Dorsolateral prefrontal cortex (tissue), 120 donors: ENCODE measurements at regions of chr4 and their contacts with region 1.

Region 1: DNA sequence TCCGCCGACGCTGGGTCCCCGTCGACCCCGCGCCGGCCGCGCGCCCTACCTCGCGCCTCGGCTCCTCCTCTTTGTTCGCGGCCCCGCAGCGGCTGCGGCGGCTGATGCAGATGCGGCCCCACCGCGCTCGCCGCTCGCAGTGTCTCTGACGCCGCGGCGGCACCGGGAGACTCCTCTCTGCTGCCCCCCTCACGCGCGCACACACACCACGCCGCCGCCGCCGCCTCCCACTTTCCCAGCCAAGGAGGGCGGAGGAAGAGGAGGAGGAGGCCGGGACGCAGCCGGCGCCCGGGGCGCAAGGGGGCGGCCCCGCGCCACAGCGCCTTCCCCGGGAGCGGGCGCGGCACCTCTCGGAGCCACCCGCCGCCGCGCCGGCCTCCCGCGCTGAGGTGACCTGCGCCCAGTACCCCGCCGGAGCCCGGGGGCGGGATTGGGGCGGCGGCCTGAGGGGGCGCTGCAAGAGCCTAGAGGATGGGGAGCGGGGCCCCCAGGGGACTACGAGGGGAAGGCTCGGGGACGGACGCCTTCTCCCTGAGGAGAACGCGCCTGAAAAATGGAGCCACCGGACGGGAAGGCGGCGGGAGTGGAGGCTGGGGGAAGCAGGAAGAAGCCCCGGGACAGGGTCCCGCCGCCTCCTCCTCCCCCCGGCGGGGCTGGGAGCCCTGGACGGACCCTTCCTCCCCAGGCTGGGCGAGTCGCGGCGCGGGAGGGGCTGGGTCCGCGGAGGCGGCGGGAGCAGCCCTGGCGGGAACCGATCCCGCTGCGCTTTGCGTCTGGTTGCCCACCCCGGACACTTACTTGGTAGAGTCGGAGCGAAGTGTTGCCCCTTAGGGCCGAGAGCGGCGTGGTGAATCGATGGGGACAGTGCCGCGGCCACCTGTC is at the start of gene SH3RF1:
- DNase-seq: peak; percentile 45 to 88 (median 76)
- H3K4me3 ChIP-seq: peak within 1 kb of the TSS; percentile 59 to 98 (median 90)
- H3K27ac ChIP-seq: peak within 1 kb of the TSS; percentile 71 to 99 (median 92)
- H3K27me3 ChIP-seq: no peaks in the 10 kb centered on the region
- CTCF ChIP-seq: peak in 46 of 56 donors; percentile 11 to 76 (median 45)
- total RNA-seq, gene SH3RF1: 18.2 to 46.9 (median 29.5) TPM

Region 2: GRCh38 chr4:168923526-168924194 is 347.4 kb before region 1 on chr4:
- intact Hi-C with region 1: loop called in 1 of 2 experiments (anchors 10 kb)
- DNase-seq: peak in 5 of 10 donors; percentile 49 to 67 (median 56)
- H3K4me3 ChIP-seq: peak overlapping the region in 1 of 59 donors; percentile 9
- H3K27ac ChIP-seq: peak overlapping the region in 1 of 59 donors; percentile 14
- H3K27me3 ChIP-seq: no peaks in the 10 kb centered on the region
- CTCF ChIP-seq: peak; percentile 56 to 92 (median 82)

Region 3: DNA sequence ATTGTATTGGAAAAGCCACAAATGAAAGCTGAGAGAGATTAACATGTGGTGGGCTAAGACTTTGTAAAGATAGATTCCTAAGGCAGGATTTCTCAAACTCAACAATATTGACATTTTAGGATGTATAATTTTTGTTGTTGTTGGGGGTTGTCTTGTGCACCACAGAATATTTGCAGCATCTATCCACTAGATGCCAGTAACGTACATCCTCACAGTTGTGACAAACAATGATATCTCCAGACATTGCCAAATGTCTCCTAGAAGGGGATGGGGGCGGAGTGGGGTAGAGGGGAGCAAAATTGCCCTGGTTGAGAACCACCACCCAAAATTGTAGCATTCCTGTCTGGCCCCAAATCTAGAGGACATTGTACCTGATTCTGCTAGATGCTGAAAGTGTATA is 246.3 kb before region 1 on chr4:
- intact Hi-C with region 1: loop called (anchors 5 to 10 kb)
- DNase-seq: no peak
- H3K4me3 ChIP-seq: no peak overlapping the region
- H3K27ac ChIP-seq: no peak overlapping the region
- H3K27me3 ChIP-seq: no peaks in the 10 kb centered on the region
- CTCF ChIP-seq: peak in 55 of 56 donors; percentile 43 to 85 (median 65)

Region 4: DNA sequence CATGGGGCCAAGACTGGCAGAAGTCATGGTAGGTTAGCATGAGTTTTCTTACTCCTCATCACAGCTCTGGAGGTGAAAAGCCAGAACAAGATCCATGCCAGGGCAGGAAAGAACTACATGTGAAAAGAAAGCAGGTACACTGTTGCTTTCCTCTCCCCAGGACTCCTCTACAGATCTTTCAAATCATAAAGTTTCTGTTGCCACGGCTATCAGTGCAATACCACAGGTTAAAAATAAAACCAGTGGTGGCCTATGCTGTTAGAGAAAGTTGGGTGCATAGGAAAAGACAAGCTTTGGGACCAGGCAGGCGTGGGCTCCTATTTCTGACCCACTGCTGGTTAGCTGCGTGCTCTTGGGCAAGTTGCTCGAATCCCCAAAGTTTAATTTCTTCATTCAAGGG is 81.7 kb before region 1 on chr4:
- intact Hi-C with region 1: loop called in 1 of 2 experiments (anchors 5 kb)
- DNase-seq: no peak
- H3K4me3 ChIP-seq: no peak overlapping the region
- H3K27ac ChIP-seq: no peak overlapping the region
- H3K27me3 ChIP-seq: no peaks in the 10 kb centered on the region
- CTCF ChIP-seq: no peak

Region 5: DNA sequence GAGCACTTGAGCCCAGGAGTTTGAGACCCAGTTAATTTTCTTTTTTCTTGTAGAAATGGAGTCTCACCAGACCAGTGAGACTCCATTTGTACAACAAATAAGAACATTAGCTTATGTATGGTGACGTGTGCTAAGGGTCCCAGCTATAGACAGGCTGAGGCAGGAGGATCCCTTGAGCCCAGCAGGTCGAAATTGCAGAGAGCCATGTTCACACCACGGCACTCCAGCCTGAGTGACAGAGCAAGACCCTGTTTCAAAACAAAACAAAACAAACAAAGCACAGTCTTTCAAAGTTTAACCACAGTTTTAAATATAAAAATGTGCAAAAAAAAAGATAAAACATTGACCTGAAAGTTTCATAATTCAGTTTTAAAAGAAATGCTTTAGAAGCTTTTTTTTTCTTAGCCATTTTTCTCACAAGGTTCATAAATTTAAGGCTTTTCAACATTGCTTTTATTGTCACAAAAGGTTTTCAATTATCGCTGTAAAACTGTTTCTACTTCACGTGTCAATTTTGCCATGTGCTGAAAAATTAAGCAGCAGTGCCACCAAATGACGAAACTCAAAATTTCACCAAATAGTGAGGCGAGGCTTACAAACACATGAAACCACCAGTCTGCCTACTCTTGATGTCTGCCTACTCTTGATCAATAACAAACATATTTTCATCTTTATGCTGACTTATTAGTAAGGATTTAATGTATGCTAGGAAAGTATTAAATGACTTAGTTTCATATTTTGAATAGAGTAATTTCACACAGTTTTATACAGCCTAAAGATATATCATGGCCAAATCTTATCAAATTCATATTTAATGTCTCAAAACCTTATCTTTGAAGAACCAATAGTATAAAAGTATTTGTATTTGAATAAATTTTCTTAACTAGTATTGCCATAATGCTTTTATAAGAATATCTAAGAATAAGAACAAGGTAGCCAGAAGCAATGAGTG is 215.0 kb after region 1 on chr4:
- intact Hi-C with region 1: loop called (anchors 2 to 5 kb)
- DNase-seq: peak in 3 of 10 donors; percentile 4 to 48 (median 43)
- H3K4me3 ChIP-seq: peak overlapping the region in 13 of 59 donors; percentile 11 to 51 (median 27)
- H3K27ac ChIP-seq: peak overlapping the region in 9 of 59 donors; percentile 0 to 58 (median 14)
- H3K27me3 ChIP-seq: no peaks in the 10 kb centered on the region
- CTCF ChIP-seq: peak in 55 of 56 donors; percentile 13 to 89 (median 71)